Activated CD4-positive, alpha-beta memory T cell treated with anti-CD3 and anti-CD28 coated beads, Interleukin-2, amount 10 ng/mL, durations not matched to agents 7 days and 5 days (primary cell): ENCODE measurements at regions of chr12 and their contacts with region 1.

Region 1: GRCh38 chr12:24902511-24903328 is 46.2 kb downstream of the BCAT1 start:
- DNase-seq: peak; percentile 69
- H3K4me3 Mint-ChIP-seq: peak overlapping the region; percentile 93
- H3K27ac Mint-ChIP-seq: peak overlapping the region; percentile 78
- H3K4me1 Mint-ChIP-seq: peaks cover 39% of the 10 kb centered on the region
- H3K27me3 Mint-ChIP-seq: peaks cover 13% of the 10 kb centered on the region

Region 2: DNA sequence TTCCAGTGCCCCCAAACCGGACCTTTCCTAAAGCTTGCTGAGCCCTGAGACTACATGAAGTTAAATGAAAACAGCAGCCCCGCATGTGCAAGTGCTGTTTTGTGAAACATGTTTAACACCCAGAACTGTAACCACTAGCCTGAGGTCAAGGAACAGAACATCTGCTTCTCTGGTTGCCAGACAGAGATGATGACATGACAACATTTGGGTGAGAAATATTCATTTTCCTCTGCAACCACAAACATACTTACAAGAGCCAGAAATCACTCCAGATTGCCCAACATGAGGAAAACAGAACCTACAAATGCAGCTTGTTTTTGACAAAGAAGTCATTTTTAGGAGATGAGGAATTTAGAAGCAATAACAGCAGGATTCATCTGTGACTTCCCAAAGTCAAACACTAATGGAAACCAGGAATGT is 64.2 kb before region 1 on chr12:
- CTCF ChIA-PET with region 1: interaction called, 3 read pairs
- POLR2A ChIA-PET with region 1: interaction called, 11 read pairs
- DNase-seq: peak; percentile 42
- H3K4me3 Mint-ChIP-seq: peak overlapping the region; percentile 4
- H3K27ac Mint-ChIP-seq: peak overlapping the region; percentile 83
- H3K4me1 Mint-ChIP-seq: peaks cover 37% of the 10 kb centered on the region
- H3K27me3 Mint-ChIP-seq: no peaks in the 10 kb centered on the region

Region 3: GRCh38 chr12:24861766-24862575 is 40.7 kb before region 1 on chr12:
- CTCF ChIA-PET with region 1: no interaction called
- POLR2A ChIA-PET with region 1: no interaction called
- DNase-seq: no peak
- H3K4me3 Mint-ChIP-seq: no peak overlapping the region
- H3K27ac Mint-ChIP-seq: no peak overlapping the region
- H3K4me1 Mint-ChIP-seq: peaks cover 16% of the 10 kb centered on the region
- H3K27me3 Mint-ChIP-seq: no peaks in the 10 kb centered on the region